SK-N-SH (cell line): ENCODE measurements at regions of chr15 and their contacts with region 1.

Region 1: DNA sequence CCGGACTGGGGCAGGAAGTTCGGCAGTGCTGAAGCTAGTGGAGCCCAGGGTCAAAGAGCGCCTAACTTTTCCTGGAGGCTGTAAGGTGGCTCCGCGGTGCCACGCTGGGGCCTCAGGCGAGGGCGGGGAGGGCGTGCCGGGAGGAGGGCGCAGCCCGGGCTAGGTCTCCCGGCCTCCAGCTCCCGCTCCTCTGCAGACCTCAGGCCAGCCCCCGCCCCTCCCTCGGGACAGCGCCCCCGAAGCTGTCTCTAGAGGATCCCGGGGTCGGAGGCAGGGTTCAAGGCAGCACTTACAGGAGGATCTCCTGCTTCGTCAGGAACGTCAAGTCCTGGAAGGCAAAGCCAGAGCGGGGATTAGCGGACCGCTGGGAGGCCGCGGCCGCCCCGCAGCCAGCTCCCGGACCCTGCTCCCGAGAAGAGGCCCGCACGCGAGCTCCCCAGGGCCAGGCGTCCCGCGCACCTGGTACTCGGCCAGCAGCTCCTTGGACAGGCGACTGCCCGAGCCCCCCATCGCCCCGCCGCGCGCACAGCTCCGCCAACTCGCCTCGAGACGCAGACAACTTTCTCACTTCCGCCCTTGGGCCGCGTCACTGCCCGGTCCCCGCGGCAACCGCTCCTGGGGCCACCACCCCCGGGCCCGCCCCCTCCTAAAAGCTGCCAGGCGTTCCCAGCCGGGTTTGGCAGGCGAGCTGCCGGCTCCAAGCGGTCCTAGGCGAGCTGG is at the start of gene CIB1:
- DNase-seq: peak; percentile 73
- H3K4me3 ChIP-seq: peak within 1 kb of the TSS; percentile 71 to 78
- H3K27ac ChIP-seq: peak within 1 kb of the TSS; percentile 67 to 92
- H3K4me1 ChIP-seq: peaks cover 5 to 9% of the 10 kb centered on the region in 2 experiments; a peak in 2 of 4 replicates
- H3K27me3 ChIP-seq: no peaks in the 10 kb centered on the region
- CTCF ChIP-seq: peak; percentile 52; the same call in 1 of the 2 replicates
- EP300 ChIP-seq: no peak
- RAD21 ChIP-seq: no peak
- polyA plus RNA-seq, gene CIB1: 74.7 and 87.9 TPM in 2 replicates

Region 2: GRCh38 chr15:89680282-89680873 is 553.2 kb before region 1 on chr15:
- CTCF ChIA-PET with region 1: no interaction called
- POLR2A ChIA-PET with region 1: no interaction called
- DNase-seq: no peak
- H3K4me3 ChIP-seq: no peak overlapping the region
- H3K27ac ChIP-seq: no peak overlapping the region
- H3K4me1 ChIP-seq: peaks cover 0 to 5% of the 10 kb centered on the region in 2 experiments; a peak in 1 of 4 replicates
- H3K27me3 ChIP-seq: no peaks in the 10 kb centered on the region
- CTCF ChIP-seq: no peak
- EP300 ChIP-seq: no peak
- RAD21 ChIP-seq: no peak

Region 3: DNA sequence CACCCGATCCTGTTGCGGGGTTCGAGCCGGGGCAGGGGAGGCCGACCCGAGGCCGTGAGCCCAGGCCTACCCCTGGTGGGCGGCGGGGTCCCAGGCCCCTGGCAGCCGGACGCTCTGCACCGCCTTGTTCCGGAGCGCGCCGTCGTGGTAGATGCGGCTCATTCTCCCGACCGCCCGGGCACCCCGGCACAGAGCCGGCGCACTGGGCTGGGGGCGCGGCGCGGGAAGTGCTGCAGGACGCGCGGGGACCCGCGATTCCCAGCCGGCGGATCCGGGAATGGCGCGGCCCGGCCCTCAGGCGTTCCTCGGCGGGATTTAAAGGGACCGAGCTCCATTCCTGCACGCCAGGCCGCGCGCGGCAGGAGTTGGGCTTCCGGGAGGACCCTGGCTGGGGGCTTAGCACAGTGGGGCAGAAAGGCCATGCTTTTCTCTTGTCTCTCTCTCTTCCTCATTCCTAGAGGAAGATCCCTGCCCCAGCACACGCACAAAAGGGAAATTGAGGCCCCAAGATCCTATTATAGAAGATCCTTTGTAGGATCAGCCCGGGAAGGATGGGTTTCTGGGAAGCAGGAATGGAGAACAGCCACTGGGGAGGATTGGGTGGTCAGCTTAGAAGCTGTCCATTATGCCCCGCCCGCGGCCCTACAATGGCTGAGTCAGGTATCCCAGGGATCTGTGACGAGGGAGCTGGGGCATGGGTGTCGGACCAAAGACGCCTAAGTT is 320.7 kb before region 1 on chr15 and contains the start of gene ARPIN:
- CTCF ChIA-PET with region 1: no interaction called
- POLR2A ChIA-PET with region 1: no interaction called
- DNase-seq: peak; percentile 86
- H3K4me3 ChIP-seq: peak within 1 kb of the TSS; percentile 58 to 73
- H3K27ac ChIP-seq: peak within 1 kb of the TSS in 1 of 2 experiments; percentile 44; a peak in 1 of 4 replicates
- H3K4me1 ChIP-seq: peaks cover 0 to 5% of the 10 kb centered on the region in 2 experiments; a peak in 1 of 4 replicates
- H3K27me3 ChIP-seq: no peaks in the 10 kb centered on the region
- CTCF ChIP-seq: no peak
- EP300 ChIP-seq: no peak
- RAD21 ChIP-seq: no peak
- polyA plus RNA-seq, gene ARPIN: 13.0 and 13.5 TPM in 2 replicates

Region 4: DNA sequence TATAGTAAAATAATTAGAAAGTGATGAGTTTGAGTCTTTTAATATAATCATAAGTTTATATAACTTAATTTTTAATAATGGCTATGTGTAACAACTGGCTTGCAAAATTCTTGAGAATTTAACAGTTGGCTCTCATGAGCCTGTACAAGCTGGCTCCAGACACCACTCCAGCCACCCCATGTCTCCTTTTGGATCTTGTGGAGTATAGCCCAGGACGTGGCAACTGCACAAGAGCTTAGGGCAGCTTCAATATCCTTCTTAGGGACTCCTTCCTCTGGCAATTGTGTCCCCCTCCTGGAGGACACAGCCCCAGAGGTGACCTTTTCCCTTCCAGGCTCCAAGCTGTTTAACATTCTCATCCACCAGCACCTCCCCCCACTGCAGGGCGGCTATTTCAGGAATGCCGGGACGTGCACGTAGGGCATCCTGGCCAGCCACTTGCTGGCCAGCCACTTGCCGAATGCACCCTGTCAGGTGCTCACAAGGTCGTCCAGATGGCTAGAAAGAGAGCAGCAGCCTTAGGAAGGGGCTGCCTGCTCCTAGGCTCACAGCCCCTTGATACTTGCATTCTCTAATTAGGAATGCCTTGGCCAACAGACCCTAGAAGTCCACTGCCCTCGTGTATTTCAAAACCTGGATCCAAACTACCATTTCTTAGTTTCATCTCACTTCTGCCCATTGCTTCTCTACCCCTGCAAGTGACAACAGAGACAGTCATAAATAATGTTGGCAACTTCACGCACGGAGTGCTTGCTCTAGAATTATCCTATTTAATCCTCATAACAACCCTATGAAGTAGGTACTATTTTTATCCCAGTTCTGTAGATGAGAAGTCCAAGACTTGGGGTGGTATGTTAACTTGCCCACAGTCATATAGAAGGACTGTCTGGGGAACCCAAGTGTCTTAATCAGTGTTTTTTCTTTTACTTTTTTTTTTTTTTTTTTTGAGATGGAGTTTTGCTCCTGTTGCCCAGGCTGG is 106.8 kb before region 1 on chr15:
- CTCF ChIA-PET with region 1: no interaction called
- POLR2A ChIA-PET with region 1: no interaction called
- DNase-seq: no peak
- H3K4me3 ChIP-seq: no peak overlapping the region
- H3K27ac ChIP-seq: no peak overlapping the region
- H3K4me1 ChIP-seq: no peaks in the 10 kb centered on the region
- H3K27me3 ChIP-seq: no peaks in the 10 kb centered on the region; the same call in 1 of the 2 replicates
- CTCF ChIP-seq: no peak
- EP300 ChIP-seq: no peak
- RAD21 ChIP-seq: no peak

Region 5: DNA sequence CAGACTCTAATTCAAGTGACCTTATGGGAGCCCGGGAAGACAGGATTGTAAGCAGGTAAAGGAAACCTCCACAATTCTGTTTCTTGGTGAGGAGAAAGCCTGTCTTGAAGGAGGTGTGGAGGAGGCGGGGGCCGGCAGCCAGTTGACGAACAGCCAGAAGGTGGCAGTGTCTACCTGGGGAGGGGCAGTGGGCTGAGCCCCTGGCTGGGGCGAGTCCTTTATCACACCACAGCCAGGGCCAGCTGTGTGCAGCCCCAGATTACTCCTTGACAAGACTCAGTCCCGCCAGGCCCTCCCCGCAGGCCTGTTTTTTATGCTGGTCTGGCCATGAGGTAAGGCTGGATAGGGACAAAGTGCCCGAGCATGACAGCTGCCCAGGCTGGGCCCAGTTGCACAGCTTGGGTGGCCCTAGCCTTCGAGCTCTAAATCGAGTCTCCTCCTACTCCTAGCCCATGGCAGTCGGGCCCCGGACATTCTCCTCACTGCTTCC is 90.3 kb before region 1 on chr15:
- CTCF ChIA-PET with region 1: interaction called, 22 read pairs
- POLR2A ChIA-PET with region 1: interaction called, 10 read pairs
- DNase-seq: peak; percentile 93
- H3K4me3 ChIP-seq: no peak overlapping the region
- H3K27ac ChIP-seq: peak overlapping the region in 1 of 2 experiments; percentile 73; a peak in 2 of 4 replicates
- H3K4me1 ChIP-seq: peaks cover 0 to 14% of the 10 kb centered on the region in 2 experiments; a peak in 1 of 4 replicates
- H3K27me3 ChIP-seq: no peaks in the 10 kb centered on the region
- CTCF ChIP-seq: peak; percentile 67
- EP300 ChIP-seq: peak in 1 of 2 experiments; percentile 91; a peak in 2 of 4 replicates
- RAD21 ChIP-seq: peak; percentile 93

Region 6: DNA sequence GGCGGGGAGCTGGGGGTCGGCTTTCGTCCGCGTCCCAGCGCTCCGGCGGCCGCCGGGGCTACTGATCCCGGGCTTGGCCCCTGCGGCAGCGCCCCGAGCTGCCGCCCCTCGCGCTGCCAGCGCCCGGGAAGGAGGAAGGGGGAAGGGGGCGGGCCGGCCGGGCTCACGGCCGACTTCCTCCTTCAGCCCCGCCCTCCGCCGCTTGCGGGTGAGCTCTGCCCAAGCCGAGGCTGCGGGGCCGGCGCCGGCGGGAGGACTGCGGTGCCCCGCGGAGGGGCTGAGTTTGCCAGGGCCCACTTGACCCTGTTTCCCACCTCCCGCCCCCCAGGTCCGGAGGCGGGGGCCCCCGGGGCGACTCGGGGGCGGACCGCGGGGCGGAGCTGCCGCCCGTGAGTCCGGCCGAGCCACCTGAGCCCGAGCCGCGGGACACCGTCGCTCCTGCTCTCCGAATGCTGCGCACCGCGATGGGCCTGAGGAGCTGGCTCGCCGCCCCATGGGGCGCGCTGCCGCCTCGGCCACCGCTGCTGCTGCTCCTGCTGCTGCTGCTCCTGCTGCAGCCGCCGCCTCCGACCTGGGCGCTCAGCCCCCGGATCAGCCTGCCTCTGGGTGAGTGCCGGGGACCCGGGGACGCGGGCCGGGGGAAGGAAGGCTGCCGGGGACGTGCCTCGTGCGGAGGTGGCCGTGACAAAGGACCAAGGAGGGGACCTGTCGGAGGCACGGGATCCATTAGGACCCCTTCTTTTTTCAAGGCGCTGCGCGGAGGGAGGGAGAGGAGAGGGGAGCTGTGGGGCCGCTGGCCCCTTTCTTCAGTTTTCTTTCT is 32.2 kb before region 1 on chr15 and contains the start of gene SEMA4B:
- CTCF ChIA-PET with region 1: interaction called, 11 read pairs
- POLR2A ChIA-PET with region 1: no interaction called
- DNase-seq: peak; percentile 95
- H3K4me3 ChIP-seq: peak within 1 kb of the TSS; percentile 86 to 96
- H3K27ac ChIP-seq: peak within 1 kb of the TSS in 1 of 2 experiments; percentile 80; a peak in 2 of 4 replicates
- H3K4me1 ChIP-seq: peaks cover 3 to 44% of the 10 kb centered on the region in 2 experiments; a peak in 2 of 4 replicates
- H3K27me3 ChIP-seq: no peaks in the 10 kb centered on the region
- CTCF ChIP-seq: no peak
- EP300 ChIP-seq: no peak; a peak in 1 of 4 replicates
- RAD21 ChIP-seq: no peak
- polyA plus RNA-seq, gene SEMA4B: 15.2 and 38.9 TPM in 2 replicates

Region 7: DNA sequence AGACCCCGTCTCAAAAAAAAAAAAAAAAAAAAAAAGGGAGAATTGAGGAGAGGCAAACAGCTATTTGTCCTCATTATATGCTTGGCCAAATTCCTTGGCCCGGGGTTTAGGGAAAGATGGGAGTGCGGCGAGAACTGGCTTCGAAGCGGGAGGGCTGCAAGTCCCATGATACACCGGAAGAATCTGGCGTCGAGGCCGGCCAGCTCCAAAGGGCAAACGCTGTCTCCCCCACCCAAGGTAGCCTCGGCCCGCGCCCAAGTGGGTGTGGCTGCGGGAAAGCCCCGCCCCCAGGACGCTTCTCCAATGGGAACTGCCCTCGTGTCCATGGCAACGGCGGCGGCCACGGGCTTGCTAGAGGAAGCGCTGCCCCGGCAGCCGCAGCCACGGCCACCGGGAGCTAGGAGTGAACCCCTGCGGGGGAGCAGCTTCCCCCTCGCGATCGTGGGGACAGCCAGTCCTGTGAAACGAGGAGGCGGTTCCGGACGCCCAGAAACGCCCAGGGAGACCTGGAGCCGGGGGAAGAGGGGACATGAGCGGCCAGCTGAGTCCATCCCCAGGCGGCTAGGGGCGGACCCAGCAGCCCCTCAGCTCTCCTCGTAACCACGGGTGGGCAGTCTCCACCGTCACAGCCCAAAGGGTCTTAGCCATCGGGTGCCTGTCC is 15.8 kb after region 1 on chr15 and contains the start of gene TTLL13:
- CTCF ChIA-PET with region 1: interaction called, 13 read pairs
- POLR2A ChIA-PET with region 1: interaction called, 6 read pairs
- DNase-seq: peak; percentile 96
- H3K4me3 ChIP-seq: peak within 1 kb of the TSS; percentile 58 to 95
- H3K27ac ChIP-seq: peak within 1 kb of the TSS in 1 of 2 experiments; percentile 45; a peak in 1 of 4 replicates
- H3K4me1 ChIP-seq: no peaks in the 10 kb centered on the region; a peak in 1 of 4 replicates
- H3K27me3 ChIP-seq: no peaks in the 10 kb centered on the region
- CTCF ChIP-seq: peak; percentile 16; the same call in 1 of the 2 replicates
- EP300 ChIP-seq: no peak
- RAD21 ChIP-seq: peak; percentile 23; the same call in 1 of the 2 replicates
- polyA plus RNA-seq, gene TTLL13: 0.03 and 0.06 TPM in 2 replicates